Heart left ventricle (tissue), 16 donors: ENCODE measurements at regions of chrX and their contacts with region 1.

Region 1: DNA sequence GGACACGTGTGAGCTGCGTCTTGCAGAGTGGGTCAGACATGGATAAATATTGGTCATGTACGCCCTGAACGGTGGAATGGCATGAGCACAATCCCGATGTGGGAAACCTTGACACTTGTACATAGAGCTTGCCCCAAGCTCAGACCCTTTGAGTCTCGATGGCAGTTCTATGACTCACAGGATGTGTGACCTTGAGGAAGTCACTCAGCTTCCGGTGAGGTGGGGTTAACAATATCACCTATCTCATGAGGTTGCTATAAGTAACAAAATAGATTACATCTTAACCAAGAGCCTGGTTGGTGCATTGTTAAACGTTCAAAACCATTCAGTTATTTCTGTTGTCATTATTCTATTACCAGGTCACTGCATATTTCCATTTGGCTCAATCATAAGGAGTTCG is 109.1 kb upstream of the TBL1X start:
- DNase-seq: no peak
- ATAC-seq: no peak
- H3K4me3 ChIP-seq: no peak overlapping the region
- H3K27ac ChIP-seq: no peak overlapping the region
- H3K4me1 ChIP-seq: peaks cover 0 to 41% (median 0%) of the 10 kb centered on the region in 12 donors
- H3K27me3 ChIP-seq: peaks cover 0 to 11% (median 0%) of the 10 kb centered on the region in 9 donors
- CTCF ChIP-seq: no peak
- POLR2A ChIP-seq: no peak

Region 2: GRCh38 chrX:9189286-9189685 is 166.5 kb before region 1 on chrX:
- intact Hi-C with region 1: no loop called
- DNase-seq: no peak
- ATAC-seq: no peak
- H3K4me3 ChIP-seq: no peak overlapping the region
- H3K27ac ChIP-seq: no peak overlapping the region
- H3K4me1 ChIP-seq: no peaks in the 10 kb centered on the region
- H3K27me3 ChIP-seq: peaks cover 0 to 26% (median 0%) of the 10 kb centered on the region in 9 donors
- CTCF ChIP-seq: no peak
- POLR2A ChIP-seq: no peak

Region 3: GRCh38 chrX:9440116-9440844 is 84.5 kb after region 1 on chrX:
- intact Hi-C with region 1: loop called in 1 of 10 experiments (anchors 5 kb)
- DNase-seq: no peak
- ATAC-seq: no peak
- H3K4me3 ChIP-seq: no peak overlapping the region
- H3K27ac ChIP-seq: no peak overlapping the region
- H3K4me1 ChIP-seq: peaks cover 0 to 8% (median 0%) of the 10 kb centered on the region in 12 donors
- H3K27me3 ChIP-seq: peaks cover 0 to 16% (median 0%) of the 10 kb centered on the region in 9 donors
- CTCF ChIP-seq: no peak
- POLR2A ChIP-seq: no peak